Activated CD8-positive, alpha-beta T cell treated with anti-CD3 and anti-CD28 coated beads for 36 hours (primary cell): ENCODE measurements at regions of chr19 and their contacts with region 1.

Region 1: DNA sequence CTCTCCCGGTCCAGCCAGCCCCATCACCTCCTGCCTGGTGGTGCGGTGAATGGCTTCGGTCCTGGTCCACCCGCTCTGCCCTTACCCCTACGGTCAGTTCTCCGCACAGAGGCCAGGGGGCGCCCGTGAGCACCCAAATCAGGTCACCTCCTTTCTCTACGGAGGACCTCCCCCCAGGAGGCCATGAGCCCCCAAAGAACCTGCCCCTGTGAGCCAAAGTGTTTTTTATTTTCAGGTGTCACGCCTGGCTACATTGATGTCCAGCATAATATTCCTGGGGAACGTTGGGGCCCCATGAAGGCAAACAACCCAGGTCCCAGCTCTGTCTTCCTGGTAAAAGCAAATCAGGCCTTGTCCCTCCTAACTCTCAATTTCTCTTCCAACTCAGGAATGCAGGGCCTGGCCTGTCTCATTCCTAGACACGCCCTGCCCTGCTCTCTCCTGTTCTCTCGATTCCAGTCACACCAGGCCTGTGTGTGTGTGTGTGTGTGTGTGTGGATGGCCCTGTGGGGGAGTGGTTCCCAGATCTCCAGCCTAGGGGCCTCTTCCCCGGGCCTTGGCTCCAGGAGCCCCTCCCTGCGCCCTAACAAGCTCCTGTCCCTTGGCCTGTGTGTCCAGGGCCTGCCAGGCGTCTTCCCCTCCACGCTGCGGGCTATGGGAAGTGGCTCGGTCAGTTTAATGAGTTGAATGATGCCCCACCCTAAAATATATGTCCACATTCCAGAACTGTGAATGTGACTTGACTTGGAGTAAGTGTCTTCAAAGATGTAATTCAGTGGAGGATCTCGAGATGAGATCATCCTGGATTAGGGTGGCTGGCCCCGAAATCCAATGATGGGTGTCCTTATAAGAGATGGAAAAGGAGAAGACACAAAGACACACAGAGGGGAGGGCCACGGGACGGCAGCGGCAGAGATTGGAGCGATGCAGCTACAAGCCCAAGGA is 9.8 kb upstream of the GIPC1 start:
- DNase-seq: peak; percentile 85
- ATAC-seq: peak; percentile 87
- H3K4me3 Mint-ChIP-seq: no peak overlapping the region
- H3K27ac Mint-ChIP-seq: peak overlapping the region; percentile 69
- H3K4me1 Mint-ChIP-seq: peaks cover 40% of the 10 kb centered on the region
- H3K27me3 Mint-ChIP-seq: no peaks in the 10 kb centered on the region
- CTCF ChIP-seq: peak; percentile 88

Region 2: DNA sequence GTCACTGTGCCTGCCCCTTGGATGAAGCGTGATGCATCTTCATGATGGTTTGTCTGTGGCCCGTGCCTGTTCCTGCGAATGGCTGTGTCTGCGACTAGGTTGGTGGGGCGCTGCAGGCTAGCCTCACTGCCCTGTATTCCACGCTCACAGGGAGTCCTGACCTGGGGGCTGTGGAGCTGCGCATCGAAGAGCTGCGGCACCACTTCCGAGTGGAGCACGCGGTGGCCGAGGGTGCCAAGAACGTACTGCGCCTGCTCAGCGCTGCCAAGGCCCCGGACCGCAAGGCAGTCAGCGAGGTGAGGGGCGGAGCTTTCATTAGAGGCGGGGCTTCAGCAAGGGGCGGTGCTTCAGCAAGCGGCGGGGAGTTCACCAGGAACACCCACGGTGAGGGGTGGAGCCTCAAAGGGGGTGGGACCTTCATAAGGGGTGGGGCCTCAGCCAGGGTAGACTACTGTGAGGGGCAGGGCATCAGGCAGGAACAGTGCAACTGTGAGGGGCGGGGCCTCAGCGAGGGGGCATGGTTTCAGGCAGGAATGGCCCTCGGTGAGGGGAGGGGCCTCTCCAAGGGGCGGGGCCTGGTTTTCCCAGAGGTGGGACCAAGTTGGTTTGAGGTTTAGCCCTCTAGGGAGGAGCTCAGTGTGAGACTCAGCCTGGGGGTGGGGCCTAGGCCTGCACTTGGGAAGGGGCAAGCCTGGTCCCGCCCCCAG is 55.4 kb before region 1 on chr19:
- CTCF ChIA-PET with region 1: no interaction called
- POLR2A ChIA-PET with region 1: no interaction called
- intact Hi-C with region 1: no loop called
- DNase-seq: peak; percentile 90
- ATAC-seq: peak; percentile 100
- H3K4me3 Mint-ChIP-seq: no peak overlapping the region
- H3K27ac Mint-ChIP-seq: no peak overlapping the region
- H3K4me1 Mint-ChIP-seq: peaks cover 8% of the 10 kb centered on the region
- H3K27me3 Mint-ChIP-seq: no peaks in the 10 kb centered on the region
- CTCF ChIP-seq: no peak

Region 3: DNA sequence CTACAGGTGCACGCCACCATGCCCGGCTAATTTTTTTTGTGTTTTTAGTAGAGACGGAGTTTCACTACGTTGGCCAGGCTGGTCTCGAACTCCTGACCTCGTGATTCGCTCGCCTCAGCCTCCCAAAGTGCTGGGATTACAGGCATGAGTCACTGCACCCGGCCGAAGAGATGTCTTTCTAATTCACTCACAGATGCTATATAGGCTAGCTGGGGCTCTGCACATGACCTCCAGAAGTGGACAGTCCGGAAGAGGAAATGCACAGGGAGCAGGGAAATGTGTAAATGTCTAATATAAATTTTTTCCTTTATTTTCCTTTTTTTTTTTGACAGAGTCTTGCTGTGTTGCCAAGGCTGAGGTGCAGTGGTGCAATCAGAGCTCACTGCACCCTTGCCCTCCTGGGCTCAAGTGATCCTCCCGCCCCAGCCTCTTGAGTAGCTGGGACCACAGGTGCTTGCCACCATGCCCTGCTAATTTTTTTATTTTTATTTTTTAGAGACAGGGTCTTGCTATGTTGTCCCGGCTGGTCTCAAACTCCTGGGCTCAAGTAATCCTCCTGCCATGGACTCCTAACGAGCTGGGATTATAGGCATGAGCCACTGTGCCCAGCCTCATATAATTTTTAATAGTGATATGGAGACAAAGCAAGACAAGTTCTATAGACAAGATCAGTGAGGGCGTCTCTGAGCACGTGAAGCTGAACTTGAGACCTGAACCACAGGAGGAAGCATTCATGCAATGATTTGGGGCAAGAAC is 18.2 kb before region 1 on chr19:
- CTCF ChIA-PET with region 1: interaction called, 11 read pairs
- POLR2A ChIA-PET with region 1: interaction called, 3 read pairs
- intact Hi-C with region 1: no loop called
- DNase-seq: no peak
- ATAC-seq: no peak
- H3K4me3 Mint-ChIP-seq: no peak overlapping the region
- H3K27ac Mint-ChIP-seq: no peak overlapping the region
- H3K4me1 Mint-ChIP-seq: peaks cover 3% of the 10 kb centered on the region
- H3K27me3 Mint-ChIP-seq: no peaks in the 10 kb centered on the region
- CTCF ChIP-seq: no peak

Region 4: DNA sequence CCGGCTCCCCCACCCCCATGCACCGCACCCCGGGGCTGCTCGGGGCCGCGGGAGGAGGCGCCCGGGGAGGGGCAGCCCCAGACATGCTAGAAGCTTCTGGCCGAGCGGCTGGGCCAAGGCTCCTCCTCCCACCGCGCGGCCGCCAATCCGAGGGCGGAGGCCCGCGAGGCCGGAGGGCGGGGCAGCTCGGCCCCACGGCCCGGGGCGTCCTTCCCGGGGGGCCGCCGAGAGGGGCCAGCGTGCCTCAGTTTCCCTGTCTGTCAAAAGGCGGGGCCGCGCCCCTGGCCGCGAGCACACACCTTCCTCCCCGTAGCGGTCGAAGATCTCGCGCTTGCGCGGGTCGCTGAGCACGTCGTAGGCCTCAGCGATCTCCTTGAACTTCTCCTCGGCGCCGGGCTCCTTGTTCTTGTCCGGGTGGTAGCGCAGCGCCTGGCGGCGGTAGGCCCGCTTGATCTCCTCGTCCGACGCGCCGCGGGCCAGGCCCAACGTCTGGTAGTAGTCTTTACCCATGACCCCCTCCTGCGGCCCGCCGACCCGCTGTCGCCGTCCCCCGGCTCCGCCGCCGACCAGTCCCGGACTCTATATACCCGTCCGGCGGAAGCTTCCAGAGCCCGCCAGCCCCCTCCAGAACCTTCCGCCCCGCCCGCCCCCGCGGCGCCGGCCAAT is 12.2 kb after region 1 on chr19 and contains the start of gene DNAJB1:
- CTCF ChIA-PET with region 1: interaction called, 9 read pairs
- POLR2A ChIA-PET with region 1: interaction called, 23 read pairs
- intact Hi-C with region 1: no loop called
- DNase-seq: peak; percentile 68
- ATAC-seq: peak; percentile 34
- H3K4me3 Mint-ChIP-seq: peak within 1 kb of the TSS; percentile 81
- H3K27ac Mint-ChIP-seq: peak within 1 kb of the TSS; percentile 95
- H3K4me1 Mint-ChIP-seq: peaks cover 65% of the 10 kb centered on the region
- H3K27me3 Mint-ChIP-seq: no peaks in the 10 kb centered on the region
- CTCF ChIP-seq: no peak
- total RNA-seq, gene DNAJB1: 52.0 to 59.6 TPM

Region 5: DNA sequence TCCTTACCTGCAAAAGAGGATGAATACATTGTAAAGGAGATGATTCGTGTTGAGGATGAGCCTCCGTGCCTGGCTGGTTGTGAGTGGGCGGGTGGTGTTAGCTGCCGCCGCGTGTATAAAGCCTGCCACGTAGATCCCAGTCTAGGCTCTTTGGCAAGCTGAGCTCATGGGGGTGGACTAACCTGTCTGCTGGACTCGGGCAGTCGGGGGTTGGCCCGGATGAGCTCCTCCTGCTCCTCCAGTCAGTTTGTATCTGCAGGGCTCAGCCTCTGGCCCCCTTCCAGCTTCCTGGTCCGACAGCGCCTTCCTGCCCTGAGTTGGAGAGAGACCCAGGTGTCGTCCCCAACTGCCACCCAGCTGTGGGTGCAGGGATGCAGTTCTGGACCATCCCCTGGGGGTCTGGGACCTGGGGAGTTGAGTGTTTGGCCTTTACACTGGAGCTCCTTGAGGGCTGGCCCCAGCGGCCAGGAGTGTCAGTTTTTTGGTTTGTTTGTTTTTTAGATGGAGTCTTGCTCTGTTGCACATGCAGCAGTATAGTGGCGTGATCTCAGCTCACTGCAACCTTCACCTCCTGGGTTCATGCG is 44.5 kb after region 1 on chr19:
- CTCF ChIA-PET with region 1: interaction called, 23 read pairs
- POLR2A ChIA-PET with region 1: interaction called, 3 read pairs
- intact Hi-C with region 1: no loop called
- DNase-seq: peak; percentile 40
- ATAC-seq: no peak
- H3K4me3 Mint-ChIP-seq: no peak overlapping the region
- H3K27ac Mint-ChIP-seq: peak overlapping the region; percentile 35
- H3K4me1 Mint-ChIP-seq: peaks cover 40% of the 10 kb centered on the region
- H3K27me3 Mint-ChIP-seq: no peaks in the 10 kb centered on the region
- CTCF ChIP-seq: no peak

Region 6: DNA sequence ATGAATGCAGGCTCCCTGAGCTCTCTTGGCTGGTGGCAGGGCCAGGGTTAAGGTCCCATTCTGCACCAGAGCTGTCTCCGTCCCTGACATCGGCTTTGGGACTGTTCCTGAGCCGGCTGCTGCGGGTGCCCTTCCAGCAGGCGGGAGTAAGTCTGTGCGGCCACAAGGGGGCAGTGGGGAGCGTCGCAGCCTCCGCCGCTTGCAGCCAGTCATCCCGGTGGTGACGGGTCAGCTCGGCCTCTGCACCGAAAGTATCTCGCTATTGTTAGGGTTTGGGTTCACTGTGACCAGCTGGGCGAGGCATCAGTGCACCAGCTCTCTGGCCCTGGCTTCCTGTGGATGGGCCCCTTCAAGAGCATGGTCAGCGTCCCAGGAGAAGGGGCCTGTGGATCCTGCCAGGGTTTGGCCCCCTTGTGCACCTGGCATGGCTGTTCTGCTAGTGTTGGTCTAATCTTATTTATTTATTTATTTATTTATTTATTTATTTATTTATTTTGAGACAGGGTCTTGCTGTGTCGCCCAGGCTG is 51.0 kb after region 1 on chr19:
- CTCF ChIA-PET with region 1: interaction called, 23 read pairs
- POLR2A ChIA-PET with region 1: interaction called, 3 read pairs
- intact Hi-C with region 1: no loop called
- DNase-seq: peak; percentile 79
- ATAC-seq: peak; percentile 92
- H3K4me3 Mint-ChIP-seq: no peak overlapping the region
- H3K27ac Mint-ChIP-seq: no peak overlapping the region
- H3K4me1 Mint-ChIP-seq: peaks cover 44% of the 10 kb centered on the region
- H3K27me3 Mint-ChIP-seq: no peaks in the 10 kb centered on the region
- CTCF ChIP-seq: peak; percentile 97